GM13976 (cell line): ENCODE measurements at regions of chr18 and their contacts with region 1.

Region 1: DNA sequence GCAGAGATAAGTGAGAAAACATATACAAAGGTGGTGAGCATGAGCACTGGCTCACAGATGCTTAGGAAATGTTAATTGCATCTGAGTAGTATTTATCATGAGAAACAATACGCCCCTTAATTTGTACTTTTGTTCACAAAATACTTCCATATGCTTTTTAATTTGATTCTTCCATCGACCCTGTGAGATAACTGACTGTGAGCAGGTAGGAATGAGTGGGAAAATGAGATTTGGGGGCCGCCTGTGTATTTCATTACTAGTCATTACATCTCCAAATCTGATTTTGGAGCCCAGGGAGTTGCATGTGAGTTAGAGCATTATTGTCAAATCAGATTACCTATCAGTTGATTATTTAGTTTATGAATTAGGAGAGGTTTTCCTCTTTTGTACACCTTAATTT is 36.7 kb upstream of the NPC1 start:
- DNase-seq: no peak
- CTCF ChIP-seq: no peak

Region 2: DNA sequence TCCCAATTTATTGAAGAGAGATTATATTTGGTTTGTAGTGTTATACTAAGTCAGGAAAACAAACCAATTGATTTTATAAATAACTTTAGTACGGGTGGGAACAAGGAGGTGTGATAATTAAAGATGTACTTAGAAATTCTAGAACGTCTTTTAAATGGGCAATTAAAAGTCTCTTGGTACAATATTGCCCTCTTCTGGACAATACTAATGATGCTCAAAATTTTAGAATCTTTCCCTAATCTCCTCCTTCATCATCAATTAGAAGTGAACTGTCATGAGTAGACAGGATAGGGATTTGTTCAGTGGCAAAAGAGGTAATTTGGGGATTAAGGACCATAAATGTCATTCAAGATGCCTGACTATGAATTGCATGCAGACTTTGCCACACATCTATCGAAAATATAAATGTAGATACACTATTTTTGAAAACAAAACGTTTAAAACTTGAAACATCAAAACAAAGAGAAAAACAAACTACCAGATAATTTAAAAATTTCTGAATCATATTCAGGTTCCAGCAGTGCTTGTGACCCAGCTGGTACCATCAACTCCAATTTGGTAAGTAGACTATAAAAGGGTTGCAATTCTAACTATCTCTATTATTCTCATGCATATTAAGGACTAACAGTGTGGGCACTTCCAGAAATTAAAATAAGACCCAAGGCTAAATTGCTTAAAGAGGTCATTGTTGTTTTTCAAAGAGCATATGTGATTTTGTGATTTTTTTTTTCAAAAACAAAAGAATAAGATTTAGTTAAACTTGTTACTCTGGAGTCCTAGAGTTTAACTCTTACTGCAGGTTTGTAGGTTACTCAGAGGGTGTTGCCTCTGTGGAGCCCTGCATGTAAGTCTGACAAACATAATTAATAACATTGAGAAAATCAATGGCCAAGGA is 189.8 kb after region 1 on chr18:
- in situ Hi-C with region 1: loop called (anchors 5 kb)
- DNase-seq: peak; percentile 40
- CTCF ChIP-seq: peak; percentile 20